Kidney (tissue), 22 donors: ENCODE measurements at regions of chr2 and their contacts with region 1.

Region 1: GRCh38 chr2:236663287-236664101 is 93.9 kb downstream of the ACKR3 start:
- DNase-seq: peak in 1 of 5 donors; percentile 42
- H3K4me3 ChIP-seq: no peak overlapping the region
- H3K27ac ChIP-seq: no peak overlapping the region
- H3K4me1 ChIP-seq: peaks cover 0 to 3% (median 0%) of the 10 kb centered on the region in 3 donors
- H3K27me3 ChIP-seq: no peaks in the 10 kb centered on the region
- CTCF ChIP-seq: no peak

Region 2: DNA sequence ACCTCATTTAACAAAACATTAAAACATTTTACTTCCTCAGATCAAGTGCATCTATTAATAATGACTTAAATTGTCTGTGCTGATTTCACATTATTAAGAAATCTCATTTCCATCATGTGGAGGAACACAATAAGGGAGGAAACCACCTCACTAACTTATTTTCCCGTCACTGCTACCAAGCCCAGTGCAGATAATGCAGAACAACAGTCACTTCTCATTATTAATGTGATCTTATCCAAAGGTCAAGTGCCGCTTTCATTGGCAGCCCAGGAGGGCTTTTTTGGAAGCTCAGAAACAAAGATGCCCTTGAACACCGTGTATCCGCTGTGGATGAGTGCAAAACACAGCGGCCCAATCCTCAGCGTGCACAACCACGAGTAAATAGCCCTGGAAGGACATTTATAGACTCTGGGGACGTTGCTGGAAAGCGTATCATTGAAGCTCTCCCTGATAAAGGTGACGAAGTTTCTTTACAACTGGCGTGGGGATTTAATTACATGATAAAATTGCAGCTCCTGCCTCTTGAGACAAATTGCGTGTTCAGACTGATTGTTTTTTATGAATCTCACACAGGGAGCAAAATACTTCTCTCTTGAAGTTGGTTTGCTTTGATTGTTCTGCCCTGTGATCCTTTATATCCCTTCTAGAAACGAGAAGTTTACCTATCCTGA is 412.4 kb before region 1 on chr2:
- intact Hi-C with region 1: no loop called
- DNase-seq: no peak
- H3K4me3 ChIP-seq: no peak overlapping the region
- H3K27ac ChIP-seq: no peak overlapping the region
- H3K4me1 ChIP-seq: no peaks in the 10 kb centered on the region
- H3K27me3 ChIP-seq: no peaks in the 10 kb centered on the region
- CTCF ChIP-seq: no peak

Region 3: DNA sequence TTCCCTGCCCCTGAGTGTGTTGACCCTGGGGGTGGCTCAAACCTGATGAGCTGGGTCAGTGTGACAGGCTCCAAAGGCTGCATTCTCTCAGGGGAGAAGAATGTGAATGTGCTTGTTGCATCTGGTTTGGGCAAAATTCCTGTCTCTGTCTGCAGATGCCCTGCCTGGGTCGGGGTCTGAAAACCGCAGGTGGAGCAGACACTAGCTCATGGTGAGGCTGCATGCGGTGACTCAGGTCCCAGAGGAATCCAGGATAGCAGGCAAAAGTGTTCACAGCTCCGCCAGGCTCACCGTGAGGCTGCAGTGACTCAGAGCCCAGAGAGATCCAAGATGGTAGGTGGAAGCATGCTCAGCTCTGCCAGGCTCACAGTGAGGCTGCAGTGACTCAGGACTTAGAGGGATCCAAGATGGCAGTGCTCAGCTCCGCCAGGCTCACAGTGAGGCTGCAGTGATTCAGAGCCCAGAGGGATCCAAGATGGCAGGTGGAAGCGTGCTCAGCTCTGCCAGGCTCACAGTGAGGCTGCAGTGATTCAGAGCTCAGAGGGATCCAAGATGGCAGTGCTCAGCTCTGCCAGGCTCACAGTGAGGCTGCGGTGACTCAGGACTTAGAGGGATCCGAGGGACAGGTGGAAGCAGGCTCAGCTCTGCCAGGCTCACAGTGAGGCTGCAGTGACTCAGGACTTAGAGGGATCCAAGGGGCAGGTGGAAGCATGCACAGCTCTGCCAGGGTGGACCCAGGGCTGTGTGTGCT is 106.6 kb after region 1 on chr2:
- intact Hi-C with region 1: loop called (anchors 5 kb)
- DNase-seq: no peak
- H3K4me3 ChIP-seq: no peak overlapping the region
- H3K27ac ChIP-seq: no peak overlapping the region
- H3K4me1 ChIP-seq: no peaks in the 10 kb centered on the region
- H3K27me3 ChIP-seq: no peaks in the 10 kb centered on the region
- CTCF ChIP-seq: no peak